GM10248 (cell line): ENCODE measurements at regions of chr10 and their contacts with region 1.

Region 1: GRCh38 chr10:87817609-87818504 is at the start of gene ATAD1:
- DNase-seq: peak; percentile 88
- CTCF ChIP-seq: peak; percentile 35

Region 2: GRCh38 chr10:87750001-87750671 is 67.7 kb before region 1 on chr10:
- CTCF ChIA-PET with region 1: no interaction called
- POLR2A ChIA-PET with region 1: no interaction called
- DNase-seq: no peak
- CTCF ChIP-seq: no peak

Region 3: DNA sequence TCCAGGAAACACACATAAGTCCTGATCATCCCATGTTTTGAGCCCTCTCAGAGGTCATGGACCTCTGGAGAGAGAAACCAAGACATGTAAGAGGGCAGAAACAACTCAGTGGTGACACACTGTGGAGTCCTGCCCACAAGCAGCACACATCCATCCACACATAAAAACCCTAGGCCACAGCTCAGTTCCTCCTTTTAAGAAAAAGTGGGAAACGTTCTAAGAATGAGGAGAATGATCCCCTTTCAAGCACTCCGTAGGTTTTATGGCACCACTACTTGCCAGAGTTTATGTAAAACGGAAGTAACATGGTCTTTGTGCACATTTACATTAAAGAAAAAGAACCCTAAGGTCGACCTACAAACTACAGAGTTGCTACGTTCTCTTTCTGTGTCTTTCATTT is 19.8 kb before region 1 on chr10:
- CTCF ChIA-PET with region 1: interaction called, 10 read pairs
- POLR2A ChIA-PET with region 1: no interaction called
- DNase-seq: no peak
- CTCF ChIP-seq: no peak

Region 4: GRCh38 chr10:87842776-87843497 is 25.1 kb after region 1 on chr10:
- CTCF ChIA-PET with region 1: interaction called, 10 read pairs
- POLR2A ChIA-PET with region 1: no interaction called
- DNase-seq: no peak
- CTCF ChIP-seq: no peak

Region 5: GRCh38 chr10:87850742-87851205 is 32.9 kb after region 1 on chr10:
- CTCF ChIA-PET with region 1: interaction called, 11 read pairs
- POLR2A ChIA-PET with region 1: no interaction called
- DNase-seq: peak; percentile 46
- CTCF ChIP-seq: peak; percentile 51